Naive thymus-derived CD4-positive, alpha-beta T cell (primary cell): ENCODE measurements at regions of chr7 and their contacts with region 1.

Region 1: GRCh38 chr7:114865564-114865963 is 56.3 kb upstream of the MDFIC start:
- DNase-seq: peak; percentile 12 to 60 (median 42)
- ATAC-seq: peak; percentile 81
- H3K4me3 ChIP-seq: no peak overlapping the region
- H3K4me3 Mint-ChIP-seq: no peak overlapping the region
- H3K27ac ChIP-seq: no peak overlapping the region
- H3K27ac Mint-ChIP-seq: no peak overlapping the region
- H3K4me1 ChIP-seq: no peaks in the 10 kb centered on the region
- H3K4me1 Mint-ChIP-seq: peaks cover 0 to 6% (median 0%) of the 10 kb centered on the region in 7 donors
- H3K27me3 ChIP-seq: no peaks in the 10 kb centered on the region
- H3K27me3 Mint-ChIP-seq: no peaks in the 10 kb centered on the region

Region 2: DNA sequence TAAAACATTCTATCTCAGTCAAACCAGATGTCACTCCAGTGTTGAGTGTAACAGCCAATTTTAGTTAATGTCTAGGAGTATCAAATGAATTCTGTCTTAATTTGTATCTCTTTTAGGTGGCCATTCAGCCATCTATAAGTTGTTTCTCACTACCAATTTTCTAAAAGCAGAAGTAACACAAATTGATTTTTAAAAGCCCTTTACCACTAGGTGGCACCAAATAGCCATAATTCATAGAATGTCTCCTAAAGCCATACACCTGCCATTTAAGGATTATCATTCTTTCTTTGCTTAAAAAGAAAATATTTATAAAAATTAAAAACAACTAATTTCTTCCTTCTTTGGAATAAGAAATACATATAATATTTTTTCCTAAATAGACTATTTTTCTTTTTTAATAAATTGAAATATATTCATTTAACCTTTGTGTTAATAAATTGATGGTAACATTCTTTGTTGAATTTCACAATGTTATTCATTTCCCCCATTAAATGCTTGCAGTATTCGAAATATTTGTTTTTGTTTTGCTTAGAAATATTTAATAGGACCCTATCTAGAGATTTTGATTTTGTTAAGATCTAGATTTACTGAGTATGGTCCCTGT is 839.0 kb before region 1 on chr7:
- CTCF ChIA-PET with region 1: no interaction called
- POLR2A ChIA-PET with region 1: no interaction called
- intact Hi-C with region 1: loop called in 1 of 2 experiments (anchors 2 kb)
- DNase-seq: peak in 7 of 9 donors; percentile 10 to 60 (median 44)
- ATAC-seq: peak; percentile 54
- H3K4me3 ChIP-seq: no peak overlapping the region
- H3K4me3 Mint-ChIP-seq: no peak overlapping the region
- H3K27ac ChIP-seq: no peak overlapping the region
- H3K27ac Mint-ChIP-seq: no peak overlapping the region
- H3K4me1 ChIP-seq: no peaks in the 10 kb centered on the region
- H3K4me1 Mint-ChIP-seq: no peaks in the 10 kb centered on the region
- H3K27me3 ChIP-seq: peaks cover 0 to 4% of the 10 kb centered on the region in 2 donors
- H3K27me3 Mint-ChIP-seq: peaks cover 0 to 9% (median 0%) of the 10 kb centered on the region in 5 donors

Region 3: GRCh38 chr7:115124409-115124942 is 258.9 kb after region 1 on chr7:
- CTCF ChIA-PET with region 1: no interaction called
- POLR2A ChIA-PET with region 1: no interaction called
- intact Hi-C with region 1: loop called in 1 of 2 experiments (anchors 10 kb)
- DNase-seq: no peak
- ATAC-seq: no peak
- H3K4me3 ChIP-seq: no peak overlapping the region
- H3K4me3 Mint-ChIP-seq: no peak overlapping the region
- H3K27ac ChIP-seq: no peak overlapping the region
- H3K27ac Mint-ChIP-seq: no peak overlapping the region
- H3K4me1 ChIP-seq: peaks cover 0 to 4% of the 10 kb centered on the region in 2 donors
- H3K4me1 Mint-ChIP-seq: peaks cover 0 to 28% (median 17%) of the 10 kb centered on the region in 7 donors
- H3K27me3 ChIP-seq: no peaks in the 10 kb centered on the region
- H3K27me3 Mint-ChIP-seq: no peaks in the 10 kb centered on the region

Region 4: DNA sequence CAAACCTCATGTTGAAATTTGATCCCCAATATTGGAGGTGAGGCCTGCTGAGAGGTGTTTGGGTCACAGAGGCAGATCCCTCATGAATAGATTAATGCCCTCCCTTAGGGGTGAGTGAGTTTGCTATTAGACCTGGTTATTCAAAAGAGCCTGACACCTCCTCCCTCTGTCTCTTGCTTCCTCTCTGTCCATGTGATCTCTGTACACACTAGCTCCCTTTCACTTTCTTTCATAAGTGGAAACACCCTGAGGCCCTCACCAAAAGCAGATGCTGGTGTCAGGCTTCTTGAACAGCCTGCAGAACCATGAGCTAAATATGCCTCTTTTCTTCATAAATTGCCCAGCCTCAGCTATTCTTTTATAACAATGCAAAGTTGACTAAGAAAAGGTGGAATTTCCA is 503.4 kb after region 1 on chr7:
- CTCF ChIA-PET with region 1: no interaction called
- POLR2A ChIA-PET with region 1: no interaction called
- intact Hi-C with region 1: loop called in 1 of 2 experiments (anchors 2 kb)
- DNase-seq: no peak
- ATAC-seq: no peak
- H3K4me3 ChIP-seq: no peak overlapping the region
- H3K4me3 Mint-ChIP-seq: no peak overlapping the region
- H3K27ac ChIP-seq: no peak overlapping the region
- H3K27ac Mint-ChIP-seq: peak overlapping the region in 2 of 9 donors; percentile 38 to 42
- H3K4me1 ChIP-seq: no peaks in the 10 kb centered on the region
- H3K4me1 Mint-ChIP-seq: peaks cover 0 to 4% (median 0%) of the 10 kb centered on the region in 7 donors
- H3K27me3 ChIP-seq: no peaks in the 10 kb centered on the region
- H3K27me3 Mint-ChIP-seq: peaks cover 0 to 4% (median 0%) of the 10 kb centered on the region in 5 donors

Region 5: GRCh38 chr7:115679976-115680375 is 814.4 kb after region 1 on chr7:
- CTCF ChIA-PET with region 1: no interaction called
- POLR2A ChIA-PET with region 1: no interaction called
- intact Hi-C with region 1: loop called in 1 of 2 experiments (anchors 1 kb)
- DNase-seq: no peak
- ATAC-seq: no peak
- H3K4me3 ChIP-seq: no peak overlapping the region
- H3K4me3 Mint-ChIP-seq: no peak overlapping the region
- H3K27ac ChIP-seq: no peak overlapping the region
- H3K27ac Mint-ChIP-seq: no peak overlapping the region
- H3K4me1 ChIP-seq: no peaks in the 10 kb centered on the region
- H3K4me1 Mint-ChIP-seq: no peaks in the 10 kb centered on the region
- H3K27me3 ChIP-seq: peaks cover 0 to 3% of the 10 kb centered on the region in 2 donors
- H3K27me3 Mint-ChIP-seq: no peaks in the 10 kb centered on the region

Region 6: GRCh38 chr7:115851291-115851690 is 985.7 kb after region 1 on chr7:
- CTCF ChIA-PET with region 1: interaction called, 3 read pairs
- POLR2A ChIA-PET with region 1: no interaction called
- intact Hi-C with region 1: loop called in 1 of 2 experiments (anchors 5 kb)
- DNase-seq: peak in 1 of 9 donors; percentile 2
- ATAC-seq: no peak
- H3K4me3 ChIP-seq: no peak overlapping the region
- H3K4me3 Mint-ChIP-seq: no peak overlapping the region
- H3K27ac ChIP-seq: no peak overlapping the region
- H3K27ac Mint-ChIP-seq: no peak overlapping the region
- H3K4me1 ChIP-seq: no peaks in the 10 kb centered on the region
- H3K4me1 Mint-ChIP-seq: no peaks in the 10 kb centered on the region
- H3K27me3 ChIP-seq: no peaks in the 10 kb centered on the region
- H3K27me3 Mint-ChIP-seq: peaks cover 0 to 12% (median 0%) of the 10 kb centered on the region in 5 donors